Breast epithelium (tissue), 4 donors: ENCODE measurements at regions of chr5 and their contacts with region 1.

Region 1: DNA sequence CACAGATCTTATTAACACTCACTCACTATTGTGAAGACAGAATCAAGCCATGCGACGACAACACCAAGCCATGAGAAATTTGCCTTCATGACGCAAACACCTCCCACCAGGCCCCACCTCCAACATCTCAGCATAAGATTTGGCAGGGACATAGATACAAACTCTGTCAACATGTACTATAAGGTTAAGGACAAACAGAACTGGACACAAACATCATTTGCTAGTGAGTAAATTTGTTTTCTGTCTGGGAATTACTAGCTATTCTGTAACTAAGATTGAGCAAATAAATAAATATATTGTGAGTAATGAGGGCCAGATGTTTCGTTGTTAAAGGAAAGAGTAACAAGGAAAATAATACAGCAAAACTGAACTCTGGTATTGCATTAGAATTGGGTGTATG is 15.7 kb upstream of the KCNN2 start:
- DNase-seq: no peak
- H3K4me3 ChIP-seq: no peak overlapping the region
- H3K27ac ChIP-seq: no peak overlapping the region
- H3K4me1 ChIP-seq: no peaks in the 10 kb centered on the region
- H3K27me3 ChIP-seq: no peaks in the 10 kb centered on the region
- CTCF ChIP-seq: no peak
- POLR2A ChIP-seq: no peak

Region 2: GRCh38 chr5:114581136-114581535 is 235.0 kb after region 1 on chr5:
- intact Hi-C with region 1: loop called (anchors 5 kb)
- DNase-seq: no peak
- H3K4me3 ChIP-seq: no peak overlapping the region
- H3K27ac ChIP-seq: no peak overlapping the region
- H3K4me1 ChIP-seq: no peaks in the 10 kb centered on the region
- H3K27me3 ChIP-seq: no peaks in the 10 kb centered on the region
- CTCF ChIP-seq: no peak
- POLR2A ChIP-seq: no peak

Region 3: DNA sequence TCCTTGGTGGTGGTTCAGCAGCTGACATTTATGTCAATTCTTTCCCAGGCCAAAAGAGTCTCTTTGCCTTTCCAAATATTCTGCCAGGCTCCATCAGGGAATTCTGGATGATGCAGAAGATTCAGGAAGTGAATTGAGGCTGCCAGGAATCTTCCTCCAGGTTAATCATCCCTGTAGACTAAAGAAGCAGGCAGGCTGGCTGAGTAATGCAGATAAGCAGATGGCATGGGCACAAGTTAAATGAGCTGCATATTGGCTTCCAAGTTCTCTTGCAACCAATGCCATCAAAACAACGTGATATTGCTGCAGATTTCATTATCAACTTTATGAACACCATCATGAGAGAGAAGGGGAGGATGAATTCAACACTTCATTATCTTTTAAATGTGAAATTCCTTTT is 340.2 kb after region 1 on chr5:
- intact Hi-C with region 1: no loop called
- DNase-seq: no peak
- H3K4me3 ChIP-seq: no peak overlapping the region
- H3K27ac ChIP-seq: no peak overlapping the region
- H3K4me1 ChIP-seq: no peaks in the 10 kb centered on the region
- H3K27me3 ChIP-seq: no peaks in the 10 kb centered on the region
- CTCF ChIP-seq: no peak
- POLR2A ChIP-seq: no peak